ENCODE measurements at regions of chr5 and their contacts with region 1.

Region 1: GRCh38 chr5:40679155-40679913 is 381 bp upstream of the PTGER4 start:
- DNase-seq: peak; percentile 93
- H3K4me3 ChIP-seq: peak overlapping the region; percentile 71 to 98 (median 97)
- H3K27ac ChIP-seq: peak overlapping the region; percentile 76
- H3K4me1 ChIP-seq: peaks cover 30% of the 10 kb centered on the region
- H3K27me3 ChIP-seq: no peaks in the 10 kb centered on the region
- CTCF ChIP-seq: no peak
- POLR2A ChIP-seq: peak; percentile 96

Region 2: GRCh38 chr5:39948867-39949468 is 730.4 kb before region 1 on chr5:
- CTCF ChIA-PET with region 1: interaction called, 93 read pairs
- POLR2A ChIA-PET with region 1: no interaction called
- dilution Hi-C with region 1: no loop called
- intact Hi-C with region 1: loop called (anchors 1 kb)
- DNase-seq: peak; percentile 77
- H3K4me3 ChIP-seq: no peak overlapping the region
- H3K27ac ChIP-seq: no peak overlapping the region
- H3K4me1 ChIP-seq: no peaks in the 10 kb centered on the region
- H3K27me3 ChIP-seq: no peaks in the 10 kb centered on the region
- CTCF ChIP-seq: peak; percentile 49 to 55
- POLR2A ChIP-seq: no peak

Region 3: GRCh38 chr5:40165794-40166728 is 513.3 kb before region 1 on chr5:
- CTCF ChIA-PET with region 1: interaction called, 65 read pairs
- POLR2A ChIA-PET with region 1: no interaction called
- dilution Hi-C with region 1: no loop called
- intact Hi-C with region 1: no loop called
- DNase-seq: peak; percentile 44
- H3K4me3 ChIP-seq: no peak overlapping the region
- H3K27ac ChIP-seq: no peak overlapping the region
- H3K4me1 ChIP-seq: peaks cover 6% of the 10 kb centered on the region
- H3K27me3 ChIP-seq: no peaks in the 10 kb centered on the region
- CTCF ChIP-seq: peak in 1 of 2 donors; percentile 10
- POLR2A ChIP-seq: no peak

Region 4: GRCh38 chr5:40333459-40334244 is 345.7 kb before region 1 on chr5:
- CTCF ChIA-PET with region 1: no interaction called
- POLR2A ChIA-PET with region 1: interaction called, 9 read pairs
- dilution Hi-C with region 1: no loop called
- intact Hi-C with region 1: loop called (anchors 1 kb)
- DNase-seq: peak; percentile 90
- H3K4me3 ChIP-seq: no peak overlapping the region
- H3K27ac ChIP-seq: peak overlapping the region; percentile 70
- H3K4me1 ChIP-seq: peaks cover 20% of the 10 kb centered on the region
- H3K27me3 ChIP-seq: no peaks in the 10 kb centered on the region
- CTCF ChIP-seq: no peak
- POLR2A ChIP-seq: peak; percentile 54

Region 5: DNA sequence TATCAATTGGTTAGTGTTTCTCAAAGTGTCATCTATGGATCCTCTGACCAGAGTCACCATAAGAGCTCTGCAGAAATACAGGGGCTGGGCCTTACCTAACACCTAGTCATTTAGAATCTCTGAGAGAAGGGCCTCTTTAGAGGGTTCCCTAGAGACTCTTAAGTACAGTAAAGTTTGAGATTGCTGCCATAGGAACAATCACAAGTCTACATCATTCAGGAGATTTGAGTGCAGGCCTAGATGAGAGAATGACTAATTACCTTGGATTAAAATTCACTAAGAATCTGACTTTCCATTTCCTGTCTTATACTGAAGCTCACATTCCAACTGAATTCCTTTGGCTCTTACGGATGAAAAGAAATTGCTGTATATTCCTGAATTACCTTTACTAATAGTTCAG is 181.8 kb before region 1 on chr5:
- CTCF ChIA-PET with region 1: interaction called, 3 read pairs
- POLR2A ChIA-PET with region 1: no interaction called
- dilution Hi-C with region 1: no loop called
- intact Hi-C with region 1: loop called (anchors 2 kb)
- DNase-seq: peak; percentile 65
- H3K4me3 ChIP-seq: no peak overlapping the region
- H3K27ac ChIP-seq: no peak overlapping the region
- H3K4me1 ChIP-seq: peaks cover 7% of the 10 kb centered on the region
- H3K27me3 ChIP-seq: no peaks in the 10 kb centered on the region
- CTCF ChIP-seq: no peak
- POLR2A ChIP-seq: no peak

Region 6: GRCh38 chr5:40570408-40571129 is 108.8 kb before region 1 on chr5:
- CTCF ChIA-PET with region 1: interaction called, 3 read pairs
- POLR2A ChIA-PET with region 1: interaction called, 5 read pairs
- dilution Hi-C with region 1: no loop called
- intact Hi-C with region 1: loop called (anchors 1 kb)
- DNase-seq: peak; percentile 73
- H3K4me3 ChIP-seq: no peak overlapping the region
- H3K27ac ChIP-seq: peak overlapping the region; percentile 72
- H3K4me1 ChIP-seq: peaks cover 18% of the 10 kb centered on the region
- H3K27me3 ChIP-seq: no peaks in the 10 kb centered on the region
- CTCF ChIP-seq: no peak
- POLR2A ChIP-seq: no peak